Heart right ventricle (tissue), 16 donors: ENCODE measurements at regions of chr2 and their contacts with region 1.

Region 1: GRCh38 chr2:190261851-190262250 is 57.8 kb downstream of the HIBCH start:
- DNase-seq: no peak
- ATAC-seq: peak in 3 of 8 donors; percentile 55 to 84 (median 60)
- H3K4me3 ChIP-seq: no peak overlapping the region
- H3K27ac ChIP-seq: peak overlapping the region in 1 of 10 donors; percentile 9
- H3K4me1 ChIP-seq: peaks cover 0 to 8% (median 0%) of the 10 kb centered on the region in 9 donors
- H3K27me3 ChIP-seq: no peaks in the 10 kb centered on the region
- CTCF ChIP-seq: no peak

Region 2: DNA sequence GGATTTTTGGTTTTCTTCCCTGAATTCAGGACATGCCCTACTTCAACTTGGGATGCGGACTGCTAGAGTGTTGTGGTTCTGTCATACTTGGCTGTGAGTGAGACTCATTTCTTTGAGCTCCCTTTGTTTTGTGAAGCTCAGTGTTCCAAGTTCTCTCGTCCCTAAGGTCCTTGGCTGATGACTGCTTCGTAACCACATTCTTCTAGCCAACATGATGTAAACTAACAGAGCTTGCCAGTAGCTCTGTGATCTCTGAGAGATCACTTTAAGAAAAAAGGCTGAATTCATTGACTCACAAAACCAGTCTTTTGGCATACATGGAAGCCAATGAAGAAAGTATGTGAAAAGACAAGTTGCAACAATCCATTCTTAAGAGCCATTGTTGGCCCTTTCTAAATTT is 102.4 kb before region 1 on chr2:
- intact Hi-C with region 1: no loop called
- DNase-seq: peak in 1 of 2 donors; percentile 50
- ATAC-seq: peak; percentile 83 to 98 (median 95)
- H3K4me3 ChIP-seq: no peak overlapping the region
- H3K27ac ChIP-seq: peak overlapping the region in 4 of 10 donors; percentile 11 to 49 (median 34)
- H3K4me1 ChIP-seq: peaks cover 0 to 16% (median 5%) of the 10 kb centered on the region in 9 donors
- H3K27me3 ChIP-seq: no peaks in the 10 kb centered on the region
- CTCF ChIP-seq: no peak

Region 3: GRCh38 chr2:190180313-190181122 is 81.3 kb before region 1 on chr2:
- intact Hi-C with region 1: loop called in 1 of 10 experiments (anchors 5 kb)
- DNase-seq: peak; percentile 54 to 71
- ATAC-seq: peak; percentile 86 to 97 (median 90)
- H3K4me3 ChIP-seq: peak overlapping the region; percentile 42 to 77 (median 66)
- H3K27ac ChIP-seq: peak overlapping the region; percentile 85 to 97 (median 94)
- H3K4me1 ChIP-seq: peaks cover 0 to 49% (median 15%) of the 10 kb centered on the region in 9 donors
- H3K27me3 ChIP-seq: peaks cover 0 to 16% (median 0%) of the 10 kb centered on the region in 7 donors
- CTCF ChIP-seq: peak in 8 of 9 donors; percentile 9 to 74 (median 56)

Region 4: GRCh38 chr2:190311893-190312634 is 50.2 kb after region 1 on chr2:
- intact Hi-C with region 1: no loop called
- DNase-seq: no peak
- ATAC-seq: no peak
- H3K4me3 ChIP-seq: no peak overlapping the region
- H3K27ac ChIP-seq: no peak overlapping the region
- H3K4me1 ChIP-seq: peaks cover 0 to 17% (median 0%) of the 10 kb centered on the region in 9 donors
- H3K27me3 ChIP-seq: no peaks in the 10 kb centered on the region
- CTCF ChIP-seq: no peak